Posterior vena cava (tissue), 2 donors: ENCODE measurements at regions of chr15 and their contacts with region 1.

Region 1: GRCh38 chr15:78065284-78065872 is 12.1 kb downstream of the TBC1D2B start:
- DNase-seq: peak; percentile 87

Region 2: GRCh38 chr15:78000091-78000926 is 65.1 kb before region 1 on chr15:
- intact Hi-C with region 1: no loop called
- DNase-seq: peak; percentile 90

Region 3: GRCh38 chr15:78018946-78019644 is 46.3 kb before region 1 on chr15:
- intact Hi-C with region 1: loop called in 1 of 2 experiments (anchors 5 kb)
- DNase-seq: peak; percentile 47

Region 4: GRCh38 chr15:78034495-78035191 is 30.7 kb before region 1 on chr15:
- intact Hi-C with region 1: no loop called
- DNase-seq: peak; percentile 79